ENCODE measurements at regions of chr11 and their contacts with region 1.

Region 1: GRCh38 chr11:99079576-99079975 is 58.8 kb downstream of the CNTN5 start:
- DNase-seq: no peak
- H3K4me3 ChIP-seq: no peak overlapping the region
- H3K27ac ChIP-seq: no peak overlapping the region
- H3K4me1 ChIP-seq: no peaks in the 10 kb centered on the region
- H3K27me3 ChIP-seq: no peaks in the 10 kb centered on the region
- CTCF ChIP-seq: no peak
- POLR2A ChIP-seq: no peak

Region 2: DNA sequence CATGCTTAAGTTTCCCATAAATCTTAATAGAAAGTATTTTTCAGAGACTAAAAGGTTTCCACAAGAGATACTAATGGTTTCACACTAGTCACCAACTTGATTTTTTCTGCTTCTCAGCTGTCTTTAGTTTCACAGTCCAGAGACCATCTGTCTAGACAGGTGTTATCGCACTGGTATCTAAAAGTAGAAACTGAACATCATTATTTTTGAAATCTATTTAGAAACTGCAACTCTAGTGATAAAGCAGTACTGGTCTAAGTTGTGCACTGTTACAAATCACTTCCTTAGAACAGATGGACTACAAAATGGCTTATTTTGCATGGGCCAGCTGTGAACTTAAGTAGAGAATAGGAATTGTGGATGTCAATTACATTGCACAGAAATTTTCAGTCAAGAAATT is 19.2 kb after region 1 on chr11:
- intact Hi-C with region 1: loop called (anchors 1 kb)
- DNase-seq: no peak
- H3K4me3 ChIP-seq: no peak overlapping the region
- H3K27ac ChIP-seq: no peak overlapping the region
- H3K4me1 ChIP-seq: no peaks in the 10 kb centered on the region
- H3K27me3 ChIP-seq: no peaks in the 10 kb centered on the region
- CTCF ChIP-seq: no peak
- POLR2A ChIP-seq: no peak